ENCODE measurements at regions of chr4 and their contacts with region 1.

Region 1: DNA sequence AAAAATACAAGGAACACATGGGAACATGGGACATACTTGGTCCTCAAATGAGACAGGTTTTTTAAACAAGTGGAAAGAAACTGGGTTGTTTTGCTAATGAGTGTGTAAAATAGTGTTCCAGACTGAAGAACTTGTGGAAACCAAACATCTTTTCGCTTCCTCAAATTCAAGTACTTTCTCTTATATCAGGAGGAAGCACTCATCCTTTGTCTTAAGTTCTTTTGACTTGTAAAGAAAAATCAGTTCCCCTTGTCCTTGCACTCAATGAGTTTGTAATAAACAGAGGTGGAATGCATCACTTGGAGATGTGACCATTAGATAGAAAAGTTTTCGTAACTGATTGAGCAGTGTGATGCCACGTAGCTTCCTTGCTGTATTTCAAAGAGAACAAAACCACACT is 101.1 kb downstream of the PHOX2B start:
- DNase-seq: no peak

Region 2: DNA sequence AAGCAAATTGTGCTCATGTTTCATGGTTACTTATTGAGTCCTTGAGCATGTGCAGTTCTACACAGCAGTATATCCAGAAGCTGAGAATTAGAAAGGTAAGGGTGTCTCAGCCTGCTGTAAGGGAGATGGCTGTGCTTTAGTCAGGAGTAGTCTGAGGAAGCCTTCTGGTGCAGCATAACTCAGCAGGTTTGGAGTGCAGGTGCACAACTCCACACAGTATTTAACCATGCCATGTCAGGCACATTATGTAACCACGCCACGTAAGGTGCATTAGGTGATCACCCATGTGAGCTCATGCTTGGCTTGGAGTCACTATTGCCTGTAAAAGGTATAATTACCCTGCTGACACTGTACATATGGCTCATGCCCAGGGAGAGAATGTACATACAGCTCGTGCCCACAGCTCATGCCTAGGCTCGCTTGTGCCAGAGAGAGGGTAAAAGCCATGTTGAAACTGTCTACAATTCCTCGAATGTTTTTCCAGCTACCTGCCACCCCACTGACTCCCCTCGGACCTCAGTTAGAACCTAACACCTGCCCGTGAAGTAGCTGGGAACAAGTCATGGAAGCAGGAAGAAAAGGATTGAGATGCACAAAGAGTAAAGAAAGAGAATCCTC is 352.8 kb before region 1 on chr4:
- intact Hi-C with region 1: loop called in 1 of 2 experiments (anchors 5 kb)
- DNase-seq: no peak

Region 3: DNA sequence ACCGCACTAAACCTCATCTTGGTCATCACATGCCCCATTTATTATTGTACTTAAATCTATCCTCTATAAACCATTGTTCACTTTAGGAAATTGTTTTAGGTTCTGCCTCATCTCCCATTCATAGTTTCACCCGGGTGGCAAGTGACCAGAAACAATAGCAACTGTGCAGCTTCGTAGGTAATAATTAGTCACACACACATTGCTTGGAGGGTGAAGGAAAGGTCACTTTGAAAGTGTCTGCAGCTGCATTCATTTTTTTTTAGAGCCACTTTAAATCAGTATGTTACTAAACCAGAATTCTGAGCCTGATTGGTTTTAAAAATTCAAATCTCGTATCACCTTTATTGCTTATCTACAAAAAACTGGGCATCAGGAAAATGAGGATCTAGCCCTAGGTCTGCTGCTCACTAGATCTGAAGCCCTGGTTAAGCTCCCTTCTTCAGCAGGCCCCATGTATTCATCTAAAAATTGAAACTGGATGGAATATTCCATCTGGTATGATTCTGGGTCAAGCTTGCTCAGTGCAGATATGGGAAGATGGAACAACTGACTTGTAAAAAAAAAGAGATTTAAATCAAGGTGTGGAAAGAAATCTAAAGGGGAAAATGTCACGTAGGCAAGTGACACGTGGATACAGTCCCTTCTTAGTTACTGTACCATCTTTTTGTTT is 47.0 kb before region 1 on chr4:
- intact Hi-C with region 1: no loop called
- DNase-seq: no peak